ENCODE measurements at regions of chr21 and their contacts with region 1.

Region 1: DNA sequence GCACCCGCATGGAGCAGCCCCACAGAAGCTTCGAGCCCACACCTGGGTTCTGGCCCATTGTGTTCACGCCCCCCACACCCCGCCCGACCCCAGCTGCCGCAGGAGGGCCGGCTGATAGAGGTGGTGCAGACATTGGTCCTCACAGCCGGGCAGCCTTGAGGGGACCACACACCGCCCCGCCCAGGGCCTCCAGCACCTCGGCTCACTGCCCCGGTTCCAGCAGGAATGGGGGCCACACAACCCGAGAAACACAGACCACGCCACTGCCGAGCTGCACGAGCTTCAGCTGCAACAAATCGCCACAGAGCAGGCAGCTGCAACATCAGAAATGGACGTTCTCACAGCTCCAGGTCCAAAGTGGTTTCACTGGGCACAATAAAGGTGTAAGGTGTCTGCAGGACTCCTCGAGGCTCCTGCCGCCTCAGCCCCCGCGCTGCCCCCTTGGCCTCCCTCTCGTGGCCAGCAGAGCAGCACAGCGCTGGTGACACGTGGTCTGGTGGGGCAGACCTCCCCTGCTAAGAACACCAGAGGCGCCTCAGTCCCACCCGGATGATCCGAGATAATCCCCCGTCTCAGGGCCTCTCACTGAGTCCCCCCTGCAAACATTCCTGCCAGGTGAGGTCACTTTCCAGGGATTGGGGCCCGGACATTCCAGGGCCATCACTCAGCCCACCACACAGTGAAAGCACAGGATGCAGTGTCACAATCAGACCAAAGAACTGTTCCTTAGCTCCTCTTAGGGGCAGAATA is 62.3 kb upstream of the ADARB1 start:
- ATAC-seq: peak; percentile 65 to 95 (median 87)
- H3K4me3 ChIP-seq: no peak overlapping the region
- H3K27ac ChIP-seq: peak overlapping the region in 1 of 2 donors; percentile 40
- H3K4me1 ChIP-seq: peaks cover 27 to 46% of the 10 kb centered on the region in 2 donors

Region 2: GRCh38 chr21:45109831-45110492 is 97.9 kb after region 1 on chr21:
- in situ Hi-C with region 1: loop called in 1 of 9 experiments (anchors 25 kb)
- ATAC-seq: no peak
- H3K4me3 ChIP-seq: no peak overlapping the region
- H3K27ac ChIP-seq: no peak overlapping the region
- H3K4me1 ChIP-seq: peaks cover 0 to 9% of the 10 kb centered on the region in 2 donors

Region 3: GRCh38 chr21:45209046-45209445 is 197.0 kb after region 1 on chr21:
- in situ Hi-C with region 1: no loop called
- ATAC-seq: peak in 3 of 8 experiments; percentile 18 to 62 (median 23)
- H3K4me3 ChIP-seq: no peak overlapping the region
- H3K27ac ChIP-seq: no peak overlapping the region
- H3K4me1 ChIP-seq: no peaks in the 10 kb centered on the region

Measured in motor neuron (in vitro differentiated cells).